HCT116 (cell line): ENCODE measurements at regions of chr12 and their contacts with region 1.

Region 1: DNA sequence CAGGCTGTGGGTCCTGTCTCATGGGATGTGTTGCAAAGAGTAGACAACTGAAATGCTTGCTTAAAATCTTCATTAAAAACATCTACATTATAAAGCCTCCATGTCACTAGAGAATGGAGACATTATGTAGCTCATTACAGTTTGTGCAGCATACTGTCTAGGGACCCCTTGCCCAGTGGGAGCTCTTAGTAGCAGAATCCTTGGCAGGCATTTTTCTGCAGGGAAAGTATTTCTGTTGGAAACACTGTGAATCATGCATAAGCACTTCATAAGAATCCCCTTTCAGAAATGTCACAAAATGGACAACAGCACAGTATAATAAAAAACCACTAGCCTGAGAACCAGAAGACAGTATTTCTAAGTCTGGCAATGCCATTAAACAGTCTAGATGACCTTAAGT is 174.3 kb downstream of the MGAT4C start:
- DNase-seq: no peak
- ATAC-seq: no peak
- H3K4me3 ChIP-seq: no peak overlapping the region
- H3K27ac ChIP-seq: no peak overlapping the region
- H3K4me1 ChIP-seq: no peaks in the 10 kb centered on the region
- H3K27me3 ChIP-seq: no peaks in the 10 kb centered on the region
- CTCF ChIP-seq: no peak
- POLR2A ChIP-seq: no peak
- RAD21 ChIP-seq: no peak

Region 2: GRCh38 chr12:86006727-86007126 is 75.1 kb before region 1 on chr12:
- CTCF ChIA-PET with region 1: no interaction called
- POLR2A ChIA-PET with region 1: no interaction called
- RAD21 ChIA-PET with region 1: no interaction called
- intact Hi-C with region 1: loop called (anchors 2 kb)
- DNase-seq: no peak
- ATAC-seq: no peak
- H3K4me3 ChIP-seq: no peak overlapping the region
- H3K27ac ChIP-seq: no peak overlapping the region
- H3K4me1 ChIP-seq: no peaks in the 10 kb centered on the region
- H3K27me3 ChIP-seq: no peaks in the 10 kb centered on the region
- CTCF ChIP-seq: no peak
- POLR2A ChIP-seq: no peak
- RAD21 ChIP-seq: no peak

Region 3: GRCh38 chr12:86379337-86379736 is 297.5 kb after region 1 on chr12:
- CTCF ChIA-PET with region 1: no interaction called
- POLR2A ChIA-PET with region 1: no interaction called
- RAD21 ChIA-PET with region 1: no interaction called
- intact Hi-C with region 1: no loop called
- DNase-seq: no peak
- ATAC-seq: no peak
- H3K4me3 ChIP-seq: no peak overlapping the region
- H3K27ac ChIP-seq: no peak overlapping the region
- H3K4me1 ChIP-seq: no peaks in the 10 kb centered on the region
- H3K27me3 ChIP-seq: no peaks in the 10 kb centered on the region
- CTCF ChIP-seq: no peak
- POLR2A ChIP-seq: no peak
- RAD21 ChIP-seq: no peak